Activated CD4-positive, alpha-beta memory T cell treated with anti-CD3 and anti-CD28 coated beads for 36 hours (primary cell): ENCODE measurements at regions of chr18 and their contacts with region 1.

Region 1: DNA sequence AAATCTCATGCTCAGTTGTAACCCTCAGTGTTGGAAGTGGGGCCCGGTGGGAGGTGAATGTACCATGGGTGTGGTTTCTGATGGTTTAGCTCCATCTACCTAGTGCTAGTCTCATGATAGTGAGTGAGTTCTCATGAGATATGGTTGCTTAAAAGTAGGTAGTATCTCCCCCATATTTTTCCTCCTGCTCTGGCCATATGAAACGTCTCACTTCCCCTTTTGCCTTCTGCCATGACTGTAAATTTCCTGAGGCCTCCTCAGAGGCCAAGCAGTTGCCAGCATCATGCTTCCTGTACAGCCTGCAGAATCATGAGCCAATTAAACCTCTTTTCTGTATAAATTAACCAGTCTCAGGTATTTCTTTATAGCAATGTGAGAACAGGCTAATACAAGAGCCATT is 62.8 kb upstream of the RNF152 start:
- DNase-seq: no peak
- H3K4me3 Mint-ChIP-seq: no peak overlapping the region
- H3K27ac Mint-ChIP-seq: no peak overlapping the region
- H3K4me1 Mint-ChIP-seq: peaks cover 34% of the 10 kb centered on the region
- H3K27me3 Mint-ChIP-seq: peaks cover 14% of the 10 kb centered on the region

Region 2: DNA sequence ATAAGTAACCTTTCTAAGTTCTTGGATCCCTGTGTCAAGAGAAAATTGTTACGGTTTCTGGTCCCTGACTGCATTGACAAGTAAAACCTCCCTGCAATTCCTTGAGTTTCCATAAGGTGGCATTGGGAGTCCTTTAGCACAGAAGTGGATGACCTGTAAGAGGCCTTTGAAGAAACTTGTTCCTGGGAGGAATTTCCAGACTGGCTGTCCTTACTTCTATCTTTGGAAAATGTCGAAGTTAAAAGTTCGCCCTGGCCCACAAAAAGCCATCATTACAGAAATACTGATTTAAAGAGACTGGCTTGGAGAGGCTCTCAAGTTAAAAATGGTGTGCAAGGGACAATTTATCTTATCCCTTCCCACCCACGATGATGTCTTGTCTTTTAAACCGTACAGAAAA is 404.1 kb before region 1 on chr18:
- CTCF ChIA-PET with region 1: no interaction called
- POLR2A ChIA-PET with region 1: no interaction called
- intact Hi-C with region 1: loop called (anchors 10 kb)
- DNase-seq: no peak
- H3K4me3 Mint-ChIP-seq: no peak overlapping the region
- H3K27ac Mint-ChIP-seq: no peak overlapping the region
- H3K4me1 Mint-ChIP-seq: peaks cover 9% of the 10 kb centered on the region
- H3K27me3 Mint-ChIP-seq: peaks cover 9% of the 10 kb centered on the region

Region 3: GRCh38 chr18:61893971-61894750 is 61.5 kb before region 1 on chr18:
- CTCF ChIA-PET with region 1: no interaction called
- POLR2A ChIA-PET with region 1: interaction called, 3 read pairs
- intact Hi-C with region 1: loop called (anchors 1 kb)
- DNase-seq: peak; percentile 77
- H3K4me3 Mint-ChIP-seq: peak overlapping the region; percentile 74
- H3K27ac Mint-ChIP-seq: no peak overlapping the region
- H3K4me1 Mint-ChIP-seq: peaks cover 8% of the 10 kb centered on the region
- H3K27me3 Mint-ChIP-seq: peaks cover 32% of the 10 kb centered on the region

Region 4: GRCh38 chr18:61917818-61918217 is 37.8 kb before region 1 on chr18:
- CTCF ChIA-PET with region 1: interaction called, 3 read pairs
- POLR2A ChIA-PET with region 1: interaction called, 3 read pairs
- intact Hi-C with region 1: loop called (anchors 1 kb)
- DNase-seq: no peak
- H3K4me3 Mint-ChIP-seq: no peak overlapping the region
- H3K27ac Mint-ChIP-seq: no peak overlapping the region
- H3K4me1 Mint-ChIP-seq: peaks cover 20% of the 10 kb centered on the region
- H3K27me3 Mint-ChIP-seq: peaks cover 7% of the 10 kb centered on the region

Region 5: DNA sequence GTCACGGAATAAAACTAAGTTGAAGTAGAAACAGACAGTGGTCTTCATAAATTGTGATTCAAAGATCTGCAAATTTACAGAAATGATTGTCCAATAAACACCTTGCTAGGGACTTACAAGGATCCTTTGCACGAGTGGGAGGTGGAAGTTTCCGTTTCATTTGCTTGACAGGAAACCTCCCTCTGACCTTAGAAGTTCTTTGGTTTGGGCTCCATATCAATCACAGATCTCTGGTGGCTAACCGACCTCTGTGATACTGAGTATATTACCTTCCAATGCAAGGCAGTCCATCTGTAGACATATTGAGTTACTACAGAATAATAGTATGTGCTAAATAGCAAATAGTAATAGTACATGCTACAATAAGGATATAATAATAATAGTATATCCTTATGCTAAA is 29.1 kb before region 1 on chr18:
- CTCF ChIA-PET with region 1: interaction called, 5 read pairs
- POLR2A ChIA-PET with region 1: interaction called, 5 read pairs
- intact Hi-C with region 1: loop called (anchors 1 kb)
- DNase-seq: peak; percentile 70
- H3K4me3 Mint-ChIP-seq: no peak overlapping the region
- H3K27ac Mint-ChIP-seq: no peak overlapping the region
- H3K4me1 Mint-ChIP-seq: peaks cover 31% of the 10 kb centered on the region
- H3K27me3 Mint-ChIP-seq: peaks cover 11% of the 10 kb centered on the region

Region 6: DNA sequence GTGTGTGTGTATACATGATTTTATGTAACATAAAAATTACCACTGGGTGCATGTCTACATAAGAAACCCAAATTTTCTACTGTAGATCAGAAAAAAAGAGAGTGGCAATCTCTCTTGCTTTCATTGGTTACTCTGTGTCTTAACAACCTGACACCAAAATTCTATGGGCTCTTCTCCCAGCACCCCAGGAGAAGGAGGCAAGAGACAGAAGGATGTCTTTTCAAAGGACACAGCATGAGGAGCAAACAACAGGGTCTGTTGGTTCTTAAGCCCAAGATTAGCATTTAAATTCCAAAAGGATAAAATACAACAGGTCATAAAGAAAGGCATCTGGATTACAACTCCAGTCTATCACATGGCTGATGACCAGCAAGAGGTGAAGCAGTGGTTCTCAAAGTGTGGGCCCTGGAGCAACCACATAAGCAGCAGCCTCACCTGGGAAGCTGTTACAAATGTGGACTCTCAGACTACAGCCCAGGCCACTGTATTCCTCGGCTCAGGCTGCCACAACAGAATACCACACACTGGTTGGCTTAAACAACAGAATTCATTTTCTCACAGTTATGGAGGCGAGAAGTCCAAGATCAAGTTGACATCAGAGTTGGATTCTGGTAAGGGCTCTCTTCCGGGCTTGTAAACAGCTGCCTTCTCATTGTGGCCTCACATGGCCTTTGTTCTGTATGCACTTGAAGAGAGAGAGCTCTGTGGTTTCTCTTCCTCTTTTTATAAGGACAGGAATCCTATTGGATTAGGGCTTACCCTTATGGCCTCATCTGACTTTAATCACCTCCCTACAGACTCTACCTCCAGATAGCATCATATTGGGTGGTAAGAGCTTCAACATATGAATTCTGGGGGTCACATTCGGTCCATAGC is 17.0 kb after region 1 on chr18:
- CTCF ChIA-PET with region 1: interaction called, 4 read pairs
- POLR2A ChIA-PET with region 1: no interaction called
- intact Hi-C with region 1: loop called (anchors 1 kb)
- DNase-seq: no peak
- H3K4me3 Mint-ChIP-seq: no peak overlapping the region
- H3K27ac Mint-ChIP-seq: no peak overlapping the region
- H3K4me1 Mint-ChIP-seq: peaks cover 14% of the 10 kb centered on the region
- H3K27me3 Mint-ChIP-seq: no peaks in the 10 kb centered on the region

Region 7: GRCh38 chr18:61998957-61999356 is 43.3 kb after region 1 on chr18:
- CTCF ChIA-PET with region 1: no interaction called
- POLR2A ChIA-PET with region 1: no interaction called
- intact Hi-C with region 1: loop called (anchors 2 kb)
- DNase-seq: no peak
- H3K4me3 Mint-ChIP-seq: no peak overlapping the region
- H3K27ac Mint-ChIP-seq: no peak overlapping the region
- H3K4me1 Mint-ChIP-seq: peaks cover 6% of the 10 kb centered on the region
- H3K27me3 Mint-ChIP-seq: no peaks in the 10 kb centered on the region

Region 8: GRCh38 chr18:62026586-62026985 is 70.9 kb after region 1 on chr18:
- CTCF ChIA-PET with region 1: no interaction called
- POLR2A ChIA-PET with region 1: no interaction called
- intact Hi-C with region 1: no loop called
- DNase-seq: no peak
- H3K4me3 Mint-ChIP-seq: no peak overlapping the region
- H3K27ac Mint-ChIP-seq: no peak overlapping the region
- H3K4me1 Mint-ChIP-seq: no peaks in the 10 kb centered on the region
- H3K27me3 Mint-ChIP-seq: peaks cover 4% of the 10 kb centered on the region